ENCODE measurements at regions of chr16 and their contacts with region 1.

Region 1: GRCh38 chr16:88785106-88785924 is at the start of gene PIEZO1:
- DNase-seq: peak in 1 of 2 donors; percentile 79
- H3K4me3 ChIP-seq: peak within 1 kb of the TSS; percentile 75 to 100 (median 84)
- H3K27ac ChIP-seq: peak within 1 kb of the TSS; percentile 94 to 99
- H3K4me1 ChIP-seq: peaks cover 0 to 6% of the 10 kb centered on the region in 2 donors
- H3K27me3 ChIP-seq: no peaks in the 10 kb centered on the region
- CTCF ChIP-seq: peak; percentile 70 to 92 (median 88)
- POLR2A ChIP-seq: no peak
- total RNA-seq, gene PIEZO1: 90.7 to 181 (median 135) TPM

Region 2: GRCh38 chr16:87216474-87217275 is 1568.6 kb before region 1 on chr16:
- intact Hi-C with region 1: no loop called
- DNase-seq: no peak
- H3K4me3 ChIP-seq: peak overlapping the region in 2 of 3 donors; percentile 3 to 11
- H3K27ac ChIP-seq: no peak overlapping the region
- H3K4me1 ChIP-seq: no peaks in the 10 kb centered on the region
- H3K27me3 ChIP-seq: no peaks in the 10 kb centered on the region
- CTCF ChIP-seq: no peak
- POLR2A ChIP-seq: no peak

Region 3: GRCh38 chr16:88743693-88744576 is 41.4 kb before region 1 on chr16:
- intact Hi-C with region 1: loop called (anchors 5 kb)
- DNase-seq: peak; percentile 58 to 87
- H3K4me3 ChIP-seq: peak overlapping the region in 1 of 3 donors; percentile 9
- H3K27ac ChIP-seq: no peak overlapping the region
- H3K4me1 ChIP-seq: peaks cover 0 to 4% of the 10 kb centered on the region in 2 donors
- H3K27me3 ChIP-seq: no peaks in the 10 kb centered on the region
- CTCF ChIP-seq: peak; percentile 76 to 85 (median 78)
- POLR2A ChIP-seq: no peak

Region 4: DNA sequence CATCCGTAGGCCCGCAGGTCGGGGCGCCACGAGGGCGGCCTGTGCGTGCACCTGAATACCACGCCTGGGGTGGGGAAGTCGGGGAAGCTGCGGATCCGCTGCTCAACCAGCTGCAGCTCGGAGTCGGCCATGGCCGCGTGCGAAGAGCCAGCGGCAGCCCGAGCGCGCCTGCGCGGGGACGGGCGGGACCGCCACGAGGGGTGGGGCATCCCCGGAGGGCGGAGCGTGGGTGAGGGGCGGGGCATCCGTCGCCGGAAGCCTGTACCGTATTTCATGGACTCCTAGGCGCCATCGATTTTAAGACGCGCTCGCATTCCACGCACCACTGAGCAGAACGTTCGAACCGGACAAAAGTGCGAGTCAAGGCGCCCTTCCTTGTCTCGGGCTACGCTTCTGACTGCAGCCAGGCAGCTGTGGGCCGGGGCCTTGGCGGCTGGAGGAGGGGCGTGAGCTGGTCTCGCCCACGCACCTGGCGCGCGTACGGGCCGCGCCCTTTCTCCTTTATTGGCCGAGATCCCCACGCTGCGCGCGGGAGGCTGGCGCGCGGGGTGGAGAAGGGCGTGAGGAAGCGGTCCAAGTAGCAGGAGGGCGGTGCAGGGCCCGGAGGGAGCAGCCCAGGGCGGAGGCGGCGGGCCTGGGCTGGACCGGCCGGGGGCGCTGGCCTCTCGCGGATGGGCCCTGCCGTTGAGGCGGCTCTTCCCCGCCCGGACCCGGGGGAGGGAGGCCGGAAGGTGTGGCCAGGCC is 26.6 kb after region 1 on chr16 and contains the start of gene APRT:
- intact Hi-C with region 1: loop called (anchors 1 kb)
- DNase-seq: peak; percentile 93 to 98
- H3K4me3 ChIP-seq: peak within 1 kb of the TSS; percentile 71 to 89 (median 88)
- H3K27ac ChIP-seq: peak within 1 kb of the TSS; percentile 85 to 92
- H3K4me1 ChIP-seq: peaks cover 14% of the 10 kb centered on the region in 2 donors
- H3K27me3 ChIP-seq: no peaks in the 10 kb centered on the region
- CTCF ChIP-seq: peak in 2 of 3 donors; percentile 12 to 29
- POLR2A ChIP-seq: no peak
- total RNA-seq, gene APRT: 93.8 to 152 (median 126) TPM